HepG2 (cell line): ENCODE measurements at regions of chr12 and their contacts with region 1.

Region 1: GRCh38 chr12:124053851-124054250 is 80.8 kb downstream of the ZNF664 start:
- DNase-seq: peak; percentile 52
- ATAC-seq: peak; percentile 94
- H3K4me3 ChIP-seq: no peak overlapping the region
- H3K27ac ChIP-seq: no peak overlapping the region
- H3K4me1 ChIP-seq: no peaks in the 10 kb centered on the region
- H3K27me3 ChIP-seq: no peaks in the 10 kb centered on the region; a peak in 1 of 5 replicates
- CTCF ChIP-seq: peak; percentile 87
- EP300 ChIP-seq: no peak
- POLR2A ChIP-seq: no peak
- RAD21 ChIP-seq: peak; percentile 85

Region 2: GRCh38 chr12:124184456-124184855 is 130.6 kb after region 1 on chr12:
- CTCF ChIA-PET with region 1: no interaction called
- POLR2A ChIA-PET with region 1: no interaction called
- in situ Hi-C with region 1: no loop called
- intact Hi-C with region 1: loop called (anchors 1 kb)
- DNase-seq: peak; percentile 6
- ATAC-seq: peak; percentile 67
- H3K4me3 ChIP-seq: no peak overlapping the region
- H3K27ac ChIP-seq: no peak overlapping the region
- H3K4me1 ChIP-seq: peaks cover 9% of the 10 kb centered on the region
- H3K27me3 ChIP-seq: peaks cover 0 to 18% of the 10 kb centered on the region in 2 experiments; a peak in 4 of 5 replicates
- CTCF ChIP-seq: peak; percentile 50
- EP300 ChIP-seq: no peak
- POLR2A ChIP-seq: no peak
- RAD21 ChIP-seq: no peak

Region 3: GRCh38 chr12:124321040-124321481 is 267.2 kb after region 1 on chr12:
- CTCF ChIA-PET with region 1: interaction called, 21 read pairs
- POLR2A ChIA-PET with region 1: no interaction called
- in situ Hi-C with region 1: loop called (anchors 5 kb)
- intact Hi-C with region 1: loop called (anchors 1 kb)
- DNase-seq: peak; percentile 24
- ATAC-seq: peak; percentile 87
- H3K4me3 ChIP-seq: no peak overlapping the region
- H3K27ac ChIP-seq: no peak overlapping the region
- H3K4me1 ChIP-seq: no peaks in the 10 kb centered on the region
- H3K27me3 ChIP-seq: peaks cover 7 to 27% of the 10 kb centered on the region in 2 experiments; a peak in 4 of 5 replicates
- CTCF ChIP-seq: peak; percentile 96
- EP300 ChIP-seq: no peak
- POLR2A ChIP-seq: no peak
- RAD21 ChIP-seq: peak; percentile 96